Activated naive CD8-positive, alpha-beta T cell treated with anti-CD3 and anti-CD28 coated beads, Interleukin-2, amount 10 ng/mL, durations not matched to agents 7 days and 5 days (primary cell): ENCODE measurements at regions of chr17 and their contacts with region 1.

Region 1: GRCh38 chr17:75109407-75110233 is at the start of gene ARMC7:
- DNase-seq: peak; percentile 94
- ATAC-seq: peak; percentile 79
- H3K4me3 Mint-ChIP-seq: peak within 1 kb of the TSS; percentile 95
- H3K27ac Mint-ChIP-seq: peak within 1 kb of the TSS; percentile 86
- H3K4me1 Mint-ChIP-seq: peaks cover 29% of the 10 kb centered on the region
- H3K27me3 Mint-ChIP-seq: no peaks in the 10 kb centered on the region
- total RNA-seq, gene ARMC7: 16.2 to 17.6 TPM

Region 2: DNA sequence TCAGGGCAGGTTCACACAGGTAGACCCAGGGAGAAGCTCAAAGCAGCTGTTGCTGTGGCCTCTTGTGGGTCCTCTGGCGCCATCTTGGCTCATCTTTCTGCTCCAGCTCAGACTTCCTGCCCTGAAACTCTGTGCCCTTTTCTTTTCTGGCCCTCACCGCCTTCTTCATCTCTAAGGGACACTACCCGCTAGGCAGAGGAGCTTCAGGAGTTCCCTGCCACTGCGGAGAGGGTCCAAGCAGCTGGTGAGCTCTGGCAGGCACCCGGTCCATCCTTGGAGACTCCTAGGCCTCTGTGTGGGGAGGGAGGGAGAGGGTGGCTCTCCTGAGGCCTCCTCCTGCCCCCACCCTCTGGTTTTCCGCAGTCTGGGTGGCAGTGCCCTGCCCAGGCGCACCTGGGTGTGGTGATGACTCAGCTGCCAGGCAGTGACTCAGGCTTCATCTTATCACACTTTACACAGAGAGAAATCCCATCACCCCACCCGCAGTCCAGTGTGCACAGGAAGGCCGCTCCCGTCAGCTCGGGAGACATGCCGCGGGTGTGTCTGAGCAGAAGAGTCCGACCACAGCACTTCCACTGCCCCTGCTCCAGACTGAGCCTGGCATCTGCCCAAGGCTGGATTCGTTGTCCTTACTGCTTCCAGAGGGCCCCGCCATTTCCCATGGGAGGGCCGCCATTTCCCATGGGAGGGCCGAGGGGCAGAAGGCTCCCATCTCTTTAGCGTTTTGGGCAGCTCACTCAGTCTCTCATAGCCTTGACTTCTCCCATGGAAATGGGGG is 14.6 kb after region 1 on chr17:
- POLR2A ChIA-PET with region 1: interaction called, 12 read pairs
- DNase-seq: no peak
- ATAC-seq: peak; percentile 10
- H3K4me3 Mint-ChIP-seq: no peak overlapping the region
- H3K27ac Mint-ChIP-seq: peak overlapping the region; percentile 95
- H3K4me1 Mint-ChIP-seq: peaks cover 30% of the 10 kb centered on the region
- H3K27me3 Mint-ChIP-seq: no peaks in the 10 kb centered on the region

Region 3: GRCh38 chr17:75154195-75155106 is 44.8 kb after region 1 on chr17 and contains the start of gene JPT1:
- POLR2A ChIA-PET with region 1: interaction called, 20 read pairs
- DNase-seq: peak; percentile 91
- ATAC-seq: peak; percentile 98
- H3K4me3 Mint-ChIP-seq: peak within 1 kb of the TSS; percentile 97
- H3K27ac Mint-ChIP-seq: peak within 1 kb of the TSS; percentile 88
- H3K4me1 Mint-ChIP-seq: peaks cover 34% of the 10 kb centered on the region
- H3K27me3 Mint-ChIP-seq: no peaks in the 10 kb centered on the region
- total RNA-seq, gene JPT1: 194 to 213 TPM

Region 4: DNA sequence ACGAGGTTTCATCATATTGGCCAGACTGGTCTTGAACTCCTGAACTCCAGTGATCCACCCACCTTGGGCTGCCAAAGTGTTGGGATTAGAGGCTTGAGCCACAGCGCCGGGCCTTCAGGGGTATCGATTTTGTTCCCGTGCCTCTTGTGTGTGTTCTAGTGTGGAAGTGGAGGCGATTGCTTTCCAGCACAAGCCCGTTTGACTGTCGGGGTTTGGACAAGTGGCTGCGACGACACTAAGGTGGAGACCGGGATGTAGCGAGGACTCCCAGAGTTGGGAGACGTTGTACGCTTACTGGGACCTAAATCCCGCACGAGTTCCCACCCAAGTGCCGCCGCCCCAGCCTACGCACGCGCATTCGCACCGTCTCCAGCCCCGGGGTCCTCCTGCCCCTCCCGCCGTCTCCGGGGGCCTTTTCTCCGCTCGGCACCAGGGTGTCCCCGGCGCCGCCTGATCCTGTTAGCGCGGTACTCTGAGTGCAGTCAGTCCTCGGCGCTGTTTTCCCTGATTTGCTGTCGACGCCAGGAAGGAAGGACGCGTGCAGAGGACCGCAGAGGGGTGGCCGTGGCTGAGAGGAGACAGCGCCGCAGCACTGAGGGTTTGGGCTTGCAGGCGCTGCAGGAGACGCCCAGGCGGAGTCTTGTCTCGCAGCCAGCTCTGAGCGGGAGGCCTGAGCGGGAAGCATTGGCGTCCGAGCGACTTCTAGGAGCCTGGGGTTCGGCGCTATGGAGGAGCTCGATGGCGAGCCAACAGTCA is 95.6 kb after region 1 on chr17 and contains the start of gene NUP85:
- POLR2A ChIA-PET with region 1: interaction called, 27 read pairs
- DNase-seq: peak; percentile 95
- ATAC-seq: peak; percentile 87
- H3K4me3 Mint-ChIP-seq: peak within 1 kb of the TSS; percentile 92
- H3K27ac Mint-ChIP-seq: peak within 1 kb of the TSS; percentile 98
- H3K4me1 Mint-ChIP-seq: peaks cover 18% of the 10 kb centered on the region
- H3K27me3 Mint-ChIP-seq: no peaks in the 10 kb centered on the region
- total RNA-seq, gene NUP85: 154 to 167 TPM